ENCODE measurements at regions of chr1 and their contacts with region 1.

Region 1: GRCh38 chr1:28213315-28213714 is 19.5 kb downstream of the DNAJC8 start:
- DNase-seq: no peak
- H3K4me3 ChIP-seq: no peak overlapping the region
- H3K27ac ChIP-seq: no peak overlapping the region
- H3K4me1 ChIP-seq: no peaks in the 10 kb centered on the region
- H3K27me3 ChIP-seq: no peaks in the 10 kb centered on the region
- CTCF ChIP-seq: no peak

Region 2: DNA sequence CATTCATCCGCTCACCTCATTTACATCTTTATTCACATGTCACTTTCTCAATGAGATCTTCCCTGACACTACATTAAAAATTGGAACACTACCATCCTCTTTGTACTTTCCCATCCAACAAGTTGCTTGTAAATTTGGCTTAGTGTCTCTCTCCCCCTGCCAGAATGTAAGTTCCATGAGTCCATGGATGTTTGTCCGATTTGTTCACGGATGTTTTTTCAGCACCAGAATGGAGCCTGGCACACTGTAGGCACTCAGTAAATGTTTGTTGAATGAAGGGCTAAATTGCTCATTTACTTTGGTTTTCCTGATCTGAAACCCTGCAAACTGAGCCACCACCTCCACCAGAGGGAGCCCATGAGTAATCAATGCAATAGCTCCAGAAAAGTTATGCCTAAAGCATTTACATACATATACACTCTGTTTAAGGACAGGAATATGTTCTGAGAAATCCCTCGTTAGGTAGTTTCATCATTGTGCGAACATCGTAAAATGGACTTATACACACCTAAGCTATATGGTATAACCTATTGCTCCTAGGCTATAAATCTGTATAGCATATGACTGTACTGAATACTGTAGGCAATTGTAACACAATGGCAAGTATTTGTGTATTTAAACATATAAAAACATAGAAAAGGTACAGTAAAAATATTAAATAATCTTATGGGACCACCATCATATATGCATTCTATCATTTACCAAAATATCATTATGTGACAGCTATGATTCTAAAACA is 122.1 kb before region 1 on chr1:
- intact Hi-C with region 1: loop called (anchors 10 kb)
- DNase-seq: peak; percentile 49
- H3K4me3 ChIP-seq: no peak overlapping the region
- H3K27ac ChIP-seq: no peak overlapping the region
- H3K4me1 ChIP-seq: peaks cover 30% of the 10 kb centered on the region
- H3K27me3 ChIP-seq: no peaks in the 10 kb centered on the region
- CTCF ChIP-seq: peak; percentile 86

Region 3: GRCh38 chr1:28139025-28139712 is 74.1 kb before region 1 on chr1:
- intact Hi-C with region 1: no loop called
- DNase-seq: no peak
- H3K4me3 ChIP-seq: no peak overlapping the region
- H3K27ac ChIP-seq: no peak overlapping the region
- H3K4me1 ChIP-seq: no peaks in the 10 kb centered on the region
- H3K27me3 ChIP-seq: no peaks in the 10 kb centered on the region
- CTCF ChIP-seq: no peak

Measured in left ventricle myocardium inferior (tissue), 1 donor.